ENCODE measurements at regions of chr13 and their contacts with region 1.

Region 1: GRCh38 chr13:19782049-19782726 is 557 bp downstream of the PSPC1 start:
- DNase-seq: peak; percentile 57
- ATAC-seq: peak; percentile 61
- H3K4me3 Mint-ChIP-seq: peak overlapping the region; percentile 97
- H3K27ac Mint-ChIP-seq: peak overlapping the region; percentile 98
- H3K4me1 Mint-ChIP-seq: peaks cover 15% of the 10 kb centered on the region
- H3K27me3 Mint-ChIP-seq: no peaks in the 10 kb centered on the region
- CTCF ChIP-seq: no peak

Region 2: DNA sequence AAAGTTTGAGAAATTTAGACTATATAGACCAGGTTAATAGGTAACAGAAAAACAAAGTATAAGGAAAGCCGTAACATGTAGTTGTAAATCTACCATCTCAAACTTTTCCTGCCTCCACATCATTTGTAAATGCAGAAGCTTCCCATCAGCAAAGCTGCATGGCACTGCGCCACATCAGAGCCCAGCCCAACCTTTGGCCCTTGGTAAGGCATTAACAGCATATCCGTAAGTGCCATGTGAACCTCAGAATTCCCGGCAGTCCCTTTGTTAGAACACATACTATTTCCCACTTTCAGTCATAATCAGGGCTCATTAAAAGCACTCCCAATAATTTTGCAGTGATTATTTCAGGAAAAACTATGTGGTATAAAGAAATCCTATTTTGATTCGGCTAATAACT is 97.2 kb before region 1 on chr13:
- CTCF ChIA-PET with region 1: no interaction called
- POLR2A ChIA-PET with region 1: no interaction called
- intact Hi-C with region 1: loop called (anchors 2 kb)
- DNase-seq: no peak
- ATAC-seq: no peak
- H3K4me3 Mint-ChIP-seq: no peak overlapping the region
- H3K27ac Mint-ChIP-seq: no peak overlapping the region
- H3K4me1 Mint-ChIP-seq: no peaks in the 10 kb centered on the region
- H3K27me3 Mint-ChIP-seq: no peaks in the 10 kb centered on the region
- CTCF ChIP-seq: no peak

Region 3: GRCh38 chr13:20090349-20090748 is 308.2 kb after region 1 on chr13:
- CTCF ChIA-PET with region 1: no interaction called
- POLR2A ChIA-PET with region 1: no interaction called
- intact Hi-C with region 1: no loop called
- DNase-seq: no peak
- ATAC-seq: no peak
- H3K4me3 Mint-ChIP-seq: no peak overlapping the region
- H3K27ac Mint-ChIP-seq: no peak overlapping the region
- H3K4me1 Mint-ChIP-seq: no peaks in the 10 kb centered on the region
- H3K27me3 Mint-ChIP-seq: no peaks in the 10 kb centered on the region
- CTCF ChIP-seq: no peak